ENCODE measurements at regions of chr2 and their contacts with region 1.

Region 1: GRCh38 chr2:179655627-179656026 is 205.8 kb downstream of the ZNF385B start:
- DNase-seq: peak; percentile 70
- ATAC-seq: peak; percentile 74
- H3K4me3 ChIP-seq: no peak overlapping the region
- H3K27ac ChIP-seq: 0 out of 2 replicates have a peak overlapping the region, but pooled peaks have one; percentile 7
- H3K4me1 ChIP-seq: peaks cover 27% of the 10 kb centered on the region
- H3K27me3 ChIP-seq: no peaks in the 10 kb centered on the region
- CTCF ChIP-seq: no peak

Region 2: GRCh38 chr2:179226203-179226960 is 429.2 kb before region 1 on chr2:
- CTCF ChIA-PET with region 1: interaction called, 12 read pairs
- POLR2A ChIA-PET with region 1: no interaction called
- intact Hi-C with region 1: no loop called
- DNase-seq: peak; percentile 44
- ATAC-seq: no peak
- H3K4me3 ChIP-seq: no peak overlapping the region
- H3K27ac ChIP-seq: no peak overlapping the region
- H3K4me1 ChIP-seq: peaks cover 13% of the 10 kb centered on the region
- H3K27me3 ChIP-seq: no peaks in the 10 kb centered on the region
- CTCF ChIP-seq: no peak

Region 3: DNA sequence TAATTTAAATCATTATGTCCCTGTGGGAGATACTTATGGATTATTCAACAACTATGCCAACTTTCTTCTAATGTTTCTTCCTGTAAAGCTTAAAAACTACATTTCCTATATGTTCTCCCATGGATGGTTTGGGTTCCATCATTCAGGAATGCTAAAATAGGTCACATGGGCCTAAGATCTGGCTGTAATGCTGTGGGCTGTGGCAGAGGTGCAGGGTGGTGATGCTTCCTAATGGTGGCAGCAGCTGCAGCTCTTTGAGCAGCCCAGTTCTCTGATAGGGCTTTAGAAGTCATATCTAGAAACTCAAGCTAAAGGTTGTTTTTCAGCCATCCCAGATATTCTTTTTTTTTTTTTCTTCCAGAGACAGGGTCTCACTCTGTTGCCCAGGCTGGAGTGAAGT is 60.3 kb before region 1 on chr2:
- CTCF ChIA-PET with region 1: no interaction called
- POLR2A ChIA-PET with region 1: no interaction called
- intact Hi-C with region 1: no loop called
- DNase-seq: peak; percentile 29
- ATAC-seq: peak; percentile 37; the same call in 1 of the 2 replicates
- H3K4me3 ChIP-seq: no peak overlapping the region
- H3K27ac ChIP-seq: no peak overlapping the region
- H3K4me1 ChIP-seq: peaks cover 20% of the 10 kb centered on the region
- H3K27me3 ChIP-seq: no peaks in the 10 kb centered on the region
- CTCF ChIP-seq: peak; percentile 39; the same call in 1 of the 2 replicates

Measured in PC-3 (cell line).